ENCODE measurements at regions of chr6 and their contacts with region 1.

Region 1: DNA sequence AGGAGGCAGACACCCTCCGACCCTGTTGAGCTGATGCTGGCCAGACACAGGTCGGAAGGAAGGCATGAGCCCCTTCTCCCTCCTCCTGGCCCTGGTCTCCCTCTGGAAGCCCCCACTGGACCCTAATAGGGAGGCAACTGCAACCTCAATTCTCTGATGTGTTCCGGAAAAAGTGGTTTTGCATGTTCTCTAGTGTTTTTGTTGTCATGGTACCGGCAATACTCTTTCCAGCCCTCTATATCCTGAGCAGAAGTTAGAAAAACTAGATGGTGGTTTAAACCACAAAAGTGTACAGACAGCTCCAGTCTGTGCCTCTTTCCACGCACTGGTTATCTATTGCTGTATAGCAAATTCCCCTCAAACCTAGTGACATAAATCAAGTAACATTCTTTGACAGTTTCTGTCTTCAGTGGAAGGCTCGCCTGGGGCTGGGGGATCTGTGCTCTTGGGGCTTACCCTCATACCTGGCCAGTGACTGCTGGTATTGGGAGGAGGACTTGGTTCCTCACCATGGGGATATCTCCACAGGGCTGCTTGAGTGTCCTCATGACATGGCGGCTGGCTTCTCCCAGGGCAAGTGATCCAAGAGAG is 37.0 kb downstream of the SYTL3 start:
- DNase-seq: peak; percentile 21 to 88 (median 79)
- H3K4me3 ChIP-seq: peak overlapping the region; percentile 27
- H3K4me3 Mint-ChIP-seq: peak overlapping the region; percentile 34 to 90 (median 80)
- H3K27ac ChIP-seq: peak overlapping the region; percentile 77
- H3K27ac Mint-ChIP-seq: peak overlapping the region; percentile 96 to 100 (median 99)
- H3K4me1 ChIP-seq: peaks cover 47% of the 10 kb centered on the region
- H3K4me1 Mint-ChIP-seq: peaks cover 38 to 75% (median 70%) of the 10 kb centered on the region in 3 donors
- H3K27me3 ChIP-seq: no peaks in the 10 kb centered on the region
- H3K27me3 Mint-ChIP-seq: no peaks in the 10 kb centered on the region

Region 2: GRCh38 chr6:158018851-158019361 is 668.0 kb before region 1 on chr6:
- CTCF ChIA-PET with region 1: no interaction called
- POLR2A ChIA-PET with region 1: no interaction called
- DNase-seq: no peak
- H3K4me3 ChIP-seq: no peak overlapping the region
- H3K4me3 Mint-ChIP-seq: no peak overlapping the region
- H3K27ac ChIP-seq: no peak overlapping the region
- H3K27ac Mint-ChIP-seq: peak overlapping the region in 1 of 8 donors; percentile 50
- H3K4me1 ChIP-seq: peaks cover 13% of the 10 kb centered on the region
- H3K4me1 Mint-ChIP-seq: peaks cover 8 to 13% (median 11%) of the 10 kb centered on the region in 3 donors
- H3K27me3 ChIP-seq: no peaks in the 10 kb centered on the region
- H3K27me3 Mint-ChIP-seq: no peaks in the 10 kb centered on the region

Region 3: GRCh38 chr6:158631678-158632537 is 55.0 kb before region 1 on chr6:
- CTCF ChIA-PET with region 1: interaction called, 11 read pairs
- POLR2A ChIA-PET with region 1: no interaction called
- DNase-seq: no peak
- H3K4me3 ChIP-seq: no peak overlapping the region
- H3K4me3 Mint-ChIP-seq: peak overlapping the region in 1 of 7 donors; percentile 6
- H3K27ac ChIP-seq: no peak overlapping the region
- H3K27ac Mint-ChIP-seq: peak overlapping the region; percentile 44 to 96 (median 86)
- H3K4me1 ChIP-seq: peaks cover 22% of the 10 kb centered on the region
- H3K4me1 Mint-ChIP-seq: peaks cover 45 to 75% (median 55%) of the 10 kb centered on the region in 3 donors
- H3K27me3 ChIP-seq: no peaks in the 10 kb centered on the region
- H3K27me3 Mint-ChIP-seq: peaks cover 0 to 2% of the 10 kb centered on the region in 2 donors

Region 4: DNA sequence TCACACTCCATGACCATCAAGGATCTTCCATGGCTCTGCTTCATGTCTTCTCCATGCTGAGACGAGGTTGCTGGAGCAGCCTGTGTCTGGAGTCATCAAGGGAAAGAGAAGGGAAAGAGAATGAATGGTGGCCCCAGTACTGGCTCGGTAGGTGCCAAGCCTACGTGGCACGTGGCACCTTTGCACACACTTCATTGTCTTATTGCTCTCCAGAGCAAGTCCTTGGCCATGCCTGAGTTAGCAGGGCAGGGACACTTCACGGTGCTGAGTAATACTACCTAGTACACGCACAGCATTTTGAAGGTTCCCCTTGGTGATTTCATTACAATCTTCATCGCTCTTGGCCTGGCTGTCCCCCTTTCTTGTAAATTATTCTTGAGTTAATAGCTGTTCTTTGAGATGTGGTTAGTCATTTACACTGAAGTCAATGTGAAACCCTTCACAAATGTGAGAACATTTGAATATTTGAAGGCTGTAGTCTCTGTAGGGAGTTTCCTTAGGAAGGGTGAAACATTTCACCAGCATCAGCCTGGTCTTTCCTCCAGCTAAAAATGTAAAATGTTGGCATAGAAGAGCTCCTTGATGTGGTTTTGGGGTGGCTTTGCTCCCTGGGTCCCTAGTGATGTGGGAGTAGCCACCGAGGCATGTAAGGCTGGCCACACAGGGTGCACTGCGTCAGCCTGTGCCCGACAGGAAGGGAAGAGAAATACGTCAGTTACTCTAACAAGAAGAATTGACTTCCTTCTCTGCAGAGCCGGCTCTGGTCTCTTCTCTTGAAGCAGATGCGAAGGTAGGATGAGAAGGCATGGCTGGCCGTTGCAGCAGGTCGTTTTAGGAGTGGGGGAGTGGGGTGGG is 37.4 kb before region 1 on chr6 and contains the start of gene SYTL3:
- CTCF ChIA-PET with region 1: interaction called, 20 read pairs
- POLR2A ChIA-PET with region 1: interaction called, 8 read pairs
- DNase-seq: peak; percentile 67 to 94 (median 88)
- H3K4me3 ChIP-seq: peak within 1 kb of the TSS; percentile 27
- H3K4me3 Mint-ChIP-seq: peak within 1 kb of the TSS; percentile 79 to 97 (median 87)
- H3K27ac ChIP-seq: peak within 1 kb of the TSS; percentile 60
- H3K27ac Mint-ChIP-seq: peak within 1 kb of the TSS; percentile 84 to 99 (median 95)
- H3K4me1 ChIP-seq: peaks cover 55% of the 10 kb centered on the region
- H3K4me1 Mint-ChIP-seq: peaks cover 60 to 85% (median 64%) of the 10 kb centered on the region in 3 donors
- H3K27me3 ChIP-seq: no peaks in the 10 kb centered on the region
- H3K27me3 Mint-ChIP-seq: peaks cover 0 to 2% of the 10 kb centered on the region in 2 donors
- total RNA-seq, gene SYTL3: 96.6 to 102 TPM

Region 5: GRCh38 chr6:158704181-158704822 is 17.4 kb after region 1 on chr6:
- CTCF ChIA-PET with region 1: interaction called, 17 read pairs
- POLR2A ChIA-PET with region 1: interaction called, 4 read pairs
- DNase-seq: peak; percentile 68 to 77 (median 70)
- H3K4me3 ChIP-seq: peak overlapping the region; percentile 62
- H3K4me3 Mint-ChIP-seq: peak overlapping the region; percentile 68 to 92 (median 83)
- H3K27ac ChIP-seq: no peak overlapping the region
- H3K27ac Mint-ChIP-seq: peak overlapping the region; percentile 33 to 91 (median 80)
- H3K4me1 ChIP-seq: peaks cover 6% of the 10 kb centered on the region
- H3K4me1 Mint-ChIP-seq: peaks cover 7 to 33% (median 12%) of the 10 kb centered on the region in 3 donors
- H3K27me3 ChIP-seq: no peaks in the 10 kb centered on the region
- H3K27me3 Mint-ChIP-seq: no peaks in the 10 kb centered on the region

Region 6: DNA sequence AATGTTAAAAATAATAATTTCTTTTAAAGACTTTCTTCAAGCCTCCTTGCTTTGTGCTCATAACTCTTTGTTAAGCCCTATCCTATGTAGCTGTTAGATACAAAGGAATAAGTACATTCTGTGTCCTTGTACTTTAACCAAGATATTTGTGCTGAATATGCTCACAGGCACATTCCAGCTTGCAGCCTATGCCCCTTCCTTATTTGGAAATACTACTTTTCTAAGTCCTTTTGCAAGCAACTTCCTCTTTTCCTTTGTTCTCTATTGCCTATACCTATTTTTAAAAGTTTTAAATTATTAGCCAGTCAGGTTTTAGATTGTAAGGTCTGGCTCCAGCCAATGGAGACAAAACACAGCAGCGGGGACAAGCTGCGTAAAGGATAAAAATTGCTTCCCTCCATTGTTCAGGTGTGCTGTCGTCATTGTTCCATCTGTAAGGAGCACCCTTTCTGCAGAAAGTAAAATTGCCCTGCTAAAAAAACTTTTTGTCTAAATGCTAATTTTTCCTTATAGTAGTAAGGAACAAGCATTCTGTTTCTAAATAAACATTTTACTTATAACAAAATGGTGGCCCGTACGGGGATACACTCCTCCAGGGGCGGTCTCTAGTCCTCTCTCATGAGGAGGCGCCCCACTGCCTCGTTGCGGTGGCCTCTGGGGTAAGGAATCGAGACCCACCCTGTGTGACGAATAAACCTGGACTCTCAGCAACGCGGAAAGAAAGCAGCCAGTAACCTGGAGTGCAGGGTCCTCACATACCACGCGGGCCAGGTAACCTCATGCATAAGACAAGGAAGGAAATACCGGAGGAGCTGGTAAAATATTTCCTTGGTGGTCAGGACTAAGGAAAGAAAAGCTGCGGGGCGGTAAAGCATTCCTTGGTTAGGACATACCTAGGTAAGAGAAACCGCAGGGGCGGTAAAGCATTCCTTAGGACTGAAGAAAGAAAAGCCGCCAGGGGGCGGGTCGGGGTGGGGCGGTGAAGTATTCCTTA is 43.3 kb after region 1 on chr6:
- CTCF ChIA-PET with region 1: no interaction called
- POLR2A ChIA-PET with region 1: no interaction called
- DNase-seq: no peak
- H3K4me3 ChIP-seq: no peak overlapping the region
- H3K4me3 Mint-ChIP-seq: no peak overlapping the region
- H3K27ac ChIP-seq: no peak overlapping the region
- H3K27ac Mint-ChIP-seq: peak overlapping the region in 1 of 8 donors; percentile 65
- H3K4me1 ChIP-seq: no peaks in the 10 kb centered on the region
- H3K4me1 Mint-ChIP-seq: peaks cover 0 to 1% (median 0%) of the 10 kb centered on the region in 3 donors
- H3K27me3 ChIP-seq: no peaks in the 10 kb centered on the region
- H3K27me3 Mint-ChIP-seq: no peaks in the 10 kb centered on the region

Region 7: GRCh38 chr6:158972241-158973233 is 285.7 kb after region 1 on chr6:
- CTCF ChIA-PET with region 1: interaction called, 15 read pairs
- POLR2A ChIA-PET with region 1: no interaction called
- DNase-seq: peak in 2 of 5 donors; percentile 43 to 55
- H3K4me3 ChIP-seq: no peak overlapping the region
- H3K4me3 Mint-ChIP-seq: no peak overlapping the region
- H3K27ac ChIP-seq: no peak overlapping the region
- H3K27ac Mint-ChIP-seq: peak overlapping the region in 1 of 8 donors; percentile 50
- H3K4me1 ChIP-seq: no peaks in the 10 kb centered on the region
- H3K4me1 Mint-ChIP-seq: peaks cover 0 to 4% (median 4%) of the 10 kb centered on the region in 3 donors
- H3K27me3 ChIP-seq: no peaks in the 10 kb centered on the region
- H3K27me3 Mint-ChIP-seq: no peaks in the 10 kb centered on the region

Region 8: GRCh38 chr6:159017757-159018559 is 331.1 kb after region 1 on chr6:
- CTCF ChIA-PET with region 1: no interaction called
- POLR2A ChIA-PET with region 1: no interaction called
- DNase-seq: no peak
- H3K4me3 ChIP-seq: no peak overlapping the region
- H3K4me3 Mint-ChIP-seq: peak overlapping the region in 6 of 7 donors; percentile 20 to 69 (median 38)
- H3K27ac ChIP-seq: no peak overlapping the region
- H3K27ac Mint-ChIP-seq: peak overlapping the region; percentile 23 to 91 (median 70)
- H3K4me1 ChIP-seq: peaks cover 39% of the 10 kb centered on the region
- H3K4me1 Mint-ChIP-seq: peaks cover 48 to 67% (median 58%) of the 10 kb centered on the region in 3 donors
- H3K27me3 ChIP-seq: no peaks in the 10 kb centered on the region
- H3K27me3 Mint-ChIP-seq: no peaks in the 10 kb centered on the region

Measured in CD8-positive, alpha-beta memory T cell (primary cell).